Activated B cell treated with CpG ODN at 0.5 μM for 24 hours (primary cell): ENCODE measurements at regions of chr4 and their contacts with region 1.

Region 1: DNA sequence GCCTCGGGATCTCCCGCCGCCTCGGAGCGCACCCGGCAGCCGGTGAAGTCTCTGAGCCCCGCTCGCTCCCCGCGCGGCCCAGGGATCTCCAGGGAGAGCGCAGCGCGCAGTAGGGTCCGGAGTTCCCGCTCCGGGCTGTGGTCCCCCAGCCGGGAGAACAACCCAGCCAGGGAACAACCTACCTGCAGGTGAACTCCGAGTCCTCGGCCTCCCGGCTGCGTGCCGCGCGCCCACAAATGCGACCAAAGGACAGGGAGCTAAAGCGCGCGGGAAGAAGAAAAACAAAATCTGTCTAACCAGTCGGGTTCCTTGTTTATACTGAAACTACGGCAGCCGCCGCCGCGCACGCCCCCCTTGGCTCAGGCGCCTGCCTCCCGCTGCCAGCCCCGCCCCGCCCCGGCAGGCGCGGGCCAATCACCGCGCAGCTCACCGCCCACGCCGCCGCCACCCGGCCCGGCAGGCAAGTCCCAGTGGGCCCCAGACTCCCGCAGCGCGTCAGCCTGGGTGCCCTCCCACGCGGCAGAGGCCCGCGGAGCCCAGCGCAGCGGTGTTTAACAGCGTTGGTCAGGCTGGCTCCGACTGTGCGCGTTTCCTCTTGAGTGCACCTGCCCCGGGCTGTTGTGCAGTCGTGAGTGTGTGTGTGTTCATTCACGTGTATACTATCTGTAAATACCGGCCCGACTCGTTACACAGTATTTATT is at the start of gene RASGEF1B:
- DNase-seq: peak; percentile 97
- ATAC-seq: peak; percentile 82
- H3K4me3 Mint-ChIP-seq: peak within 1 kb of the TSS; percentile 92
- H3K27ac Mint-ChIP-seq: peak within 1 kb of the TSS; percentile 97
- H3K4me1 Mint-ChIP-seq: peaks cover 53% of the 10 kb centered on the region
- H3K27me3 Mint-ChIP-seq: no peaks in the 10 kb centered on the region
- CTCF ChIP-seq: no peak
- total RNA-seq, gene RASGEF1B: 40.2 and 43.7 TPM in 2 replicates

Region 2: GRCh38 chr4:81494031-81494431 is 22.3 kb after region 1 on chr4:
- CTCF ChIA-PET with region 1: interaction called, 12 read pairs
- POLR2A ChIA-PET with region 1: interaction called, 75 read pairs
- intact Hi-C with region 1: loop called (anchors 1 kb)
- DNase-seq: no peak
- ATAC-seq: peak; percentile 33
- H3K4me3 Mint-ChIP-seq: peak overlapping the region; percentile 57
- H3K27ac Mint-ChIP-seq: peak overlapping the region; percentile 82
- H3K4me1 Mint-ChIP-seq: peaks cover 55% of the 10 kb centered on the region
- H3K27me3 Mint-ChIP-seq: no peaks in the 10 kb centered on the region
- CTCF ChIP-seq: no peak

Region 3: DNA sequence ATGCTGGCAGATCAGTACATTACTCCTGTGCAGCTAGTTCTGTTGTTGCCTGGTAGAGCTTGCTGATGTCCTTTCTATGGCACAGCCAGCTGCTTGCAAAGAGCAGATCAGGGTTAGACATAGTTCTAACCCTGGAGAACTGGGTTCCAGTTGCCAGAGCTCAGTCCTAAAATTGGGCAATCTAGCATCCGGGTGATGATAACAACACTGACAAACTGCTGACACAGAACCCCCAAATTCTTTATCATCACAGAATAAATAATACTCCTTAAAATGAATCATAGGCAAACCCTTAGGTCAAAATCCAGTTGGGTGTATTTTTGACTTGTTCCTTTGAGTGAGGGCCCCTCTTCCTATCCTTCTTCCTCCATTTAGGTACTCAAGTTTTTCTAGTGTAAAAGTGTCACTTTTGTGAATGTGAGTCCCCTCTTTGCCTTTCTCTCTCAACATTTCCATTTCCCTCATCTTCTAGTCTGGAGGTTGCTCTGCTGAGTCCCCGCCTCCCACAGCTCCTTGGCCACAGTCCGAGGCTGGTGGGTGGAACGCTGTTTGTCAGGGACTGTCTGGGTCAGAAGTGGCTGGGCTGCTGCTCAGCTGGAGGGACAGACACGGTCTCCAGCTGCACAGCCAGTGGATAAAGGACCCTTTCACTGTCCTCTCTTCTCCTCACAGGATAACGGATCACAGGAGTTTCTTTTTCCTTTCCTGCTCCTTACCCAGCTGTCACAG is 93.6 kb after region 1 on chr4:
- CTCF ChIA-PET with region 1: interaction called, 20 read pairs
- POLR2A ChIA-PET with region 1: interaction called, 76 read pairs
- intact Hi-C with region 1: loop called (anchors 1 kb)
- DNase-seq: no peak
- ATAC-seq: no peak
- H3K4me3 Mint-ChIP-seq: peak overlapping the region; percentile 44
- H3K27ac Mint-ChIP-seq: peak overlapping the region; percentile 69
- H3K4me1 Mint-ChIP-seq: peaks cover 69% of the 10 kb centered on the region
- H3K27me3 Mint-ChIP-seq: no peaks in the 10 kb centered on the region
- CTCF ChIP-seq: no peak

Region 4: DNA sequence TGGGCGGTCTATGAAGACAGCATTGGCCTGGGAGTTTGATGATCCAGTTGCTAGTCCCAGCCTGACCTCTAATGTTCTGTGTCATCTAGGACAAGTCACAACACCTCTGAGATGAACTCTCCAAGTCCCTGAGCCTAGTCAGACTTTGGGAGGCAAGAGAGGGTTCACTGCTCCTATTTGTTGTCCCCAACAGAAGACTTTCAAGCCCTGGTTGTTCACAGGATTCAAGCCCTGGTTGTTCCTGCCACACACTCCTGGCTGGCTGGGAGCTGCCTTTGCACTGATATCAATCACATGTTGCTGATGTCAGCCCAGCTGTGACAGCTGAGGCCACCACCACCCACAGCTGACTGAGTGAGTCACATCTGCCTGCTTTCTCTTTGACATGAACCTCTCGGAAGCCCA is 253.2 kb after region 1 on chr4:
- CTCF ChIA-PET with region 1: interaction called, 7 read pairs
- POLR2A ChIA-PET with region 1: interaction called, 4 read pairs
- intact Hi-C with region 1: loop called (anchors 1 kb)
- DNase-seq: peak; percentile 18
- ATAC-seq: peak; percentile 93
- H3K4me3 Mint-ChIP-seq: no peak overlapping the region
- H3K27ac Mint-ChIP-seq: peak overlapping the region; percentile 3
- H3K4me1 Mint-ChIP-seq: peaks cover 18% of the 10 kb centered on the region
- H3K27me3 Mint-ChIP-seq: peaks cover 3% of the 10 kb centered on the region
- CTCF ChIP-seq: no peak

Region 5: GRCh38 chr4:81747242-81747930 is 275.6 kb after region 1 on chr4:
- CTCF ChIA-PET with region 1: no interaction called
- POLR2A ChIA-PET with region 1: no interaction called
- intact Hi-C with region 1: no loop called
- DNase-seq: no peak
- ATAC-seq: no peak
- H3K4me3 Mint-ChIP-seq: no peak overlapping the region
- H3K27ac Mint-ChIP-seq: no peak overlapping the region
- H3K4me1 Mint-ChIP-seq: peaks cover 8% of the 10 kb centered on the region
- H3K27me3 Mint-ChIP-seq: no peaks in the 10 kb centered on the region
- CTCF ChIP-seq: no peak

Region 6: GRCh38 chr4:81913427-81913879 is 441.7 kb after region 1 on chr4:
- CTCF ChIA-PET with region 1: interaction called, 7 read pairs
- POLR2A ChIA-PET with region 1: no interaction called
- intact Hi-C with region 1: loop called (anchors 1 kb)
- DNase-seq: peak; percentile 20
- ATAC-seq: peak; percentile 62
- H3K4me3 Mint-ChIP-seq: no peak overlapping the region
- H3K27ac Mint-ChIP-seq: no peak overlapping the region
- H3K4me1 Mint-ChIP-seq: peaks cover 3% of the 10 kb centered on the region
- H3K27me3 Mint-ChIP-seq: peaks cover 11% of the 10 kb centered on the region
- CTCF ChIP-seq: peak; percentile 17

Region 7: DNA sequence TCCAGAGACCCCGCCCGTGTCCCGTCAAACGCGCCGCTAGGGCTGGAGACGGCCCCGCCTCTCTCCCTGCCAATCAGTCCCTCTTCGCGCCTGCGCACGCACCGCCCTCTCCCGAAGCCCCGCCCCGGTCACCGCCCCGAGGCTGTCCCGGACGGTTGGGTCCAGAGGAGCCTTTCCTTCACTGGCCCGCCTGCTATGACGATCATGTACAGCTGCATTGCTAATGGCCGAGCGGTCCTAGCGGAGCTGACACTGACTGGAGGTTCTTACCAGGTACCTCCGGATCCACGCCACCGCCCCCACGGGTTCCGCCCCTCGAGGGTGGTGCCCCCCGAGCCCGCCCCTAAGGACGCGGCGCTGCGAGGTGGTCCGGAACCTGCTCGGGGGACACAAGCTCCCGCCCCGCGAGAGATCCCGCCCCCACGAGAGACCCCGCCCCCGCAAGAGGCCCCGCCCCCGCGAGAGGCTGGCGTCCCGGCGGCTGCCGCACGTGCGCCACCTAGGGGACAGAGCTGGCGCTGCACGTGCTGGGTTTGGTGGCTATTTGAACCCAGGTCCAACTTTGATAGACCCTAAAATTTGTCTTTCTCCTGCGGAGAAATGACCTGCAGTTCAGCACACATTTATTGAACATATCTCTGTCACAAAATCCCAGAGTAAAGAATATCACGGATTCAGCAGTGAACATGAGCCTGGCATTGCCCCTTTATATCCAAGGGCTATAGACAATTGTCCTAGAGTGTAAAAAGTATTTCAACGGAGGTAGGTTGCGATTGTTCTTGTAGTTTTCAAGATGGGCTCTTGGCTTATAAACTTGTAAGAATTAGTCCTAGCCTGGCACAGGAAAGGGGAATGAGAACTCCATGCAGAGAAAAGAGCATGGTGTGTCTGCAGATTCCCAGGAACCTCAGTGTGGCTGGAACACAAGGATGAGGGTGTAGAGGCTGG is 813.4 kb after region 1 on chr4:
- CTCF ChIA-PET with region 1: interaction called, 3 read pairs
- POLR2A ChIA-PET with region 1: interaction called, 4 read pairs
- intact Hi-C with region 1: loop called (anchors 1 kb)
- DNase-seq: peak; percentile 100
- ATAC-seq: peak; percentile 92
- H3K4me3 Mint-ChIP-seq: peak overlapping the region; percentile 83
- H3K27ac Mint-ChIP-seq: peak overlapping the region; percentile 77
- H3K4me1 Mint-ChIP-seq: peaks cover 21% of the 10 kb centered on the region
- H3K27me3 Mint-ChIP-seq: no peaks in the 10 kb centered on the region
- CTCF ChIP-seq: peak; percentile 97